ENCODE measurements at regions of chr10 and their contacts with region 1.

Region 1: GRCh38 chr10:26269754-26270153 is 53.2 kb downstream of the GAD2 start:
- DNase-seq: peak; percentile 65

Region 2: DNA sequence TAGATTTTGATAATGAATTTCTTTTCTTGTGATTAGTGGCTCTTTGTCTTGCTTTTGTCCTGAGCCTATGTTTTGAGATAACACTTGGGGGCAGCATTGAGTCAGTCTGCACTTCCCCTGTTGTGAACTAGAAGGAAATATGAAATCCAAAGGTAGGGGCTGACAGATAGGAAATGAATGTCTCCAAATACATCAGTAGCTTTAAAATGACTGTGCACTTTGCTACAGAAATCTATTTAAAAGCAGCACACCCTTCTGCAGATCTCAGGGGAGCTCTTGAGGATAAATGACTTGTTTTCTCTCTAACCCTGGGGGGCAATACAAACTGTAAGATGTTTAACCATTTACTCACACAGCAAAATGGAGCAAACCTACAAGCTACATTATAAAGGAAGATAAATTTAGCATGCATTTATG is 511.7 kb before region 1 on chr10:
- CTCF ChIA-PET with region 1: interaction called, 12 read pairs
- POLR2A ChIA-PET with region 1: no interaction called
- DNase-seq: peak; percentile 46

Region 3: DNA sequence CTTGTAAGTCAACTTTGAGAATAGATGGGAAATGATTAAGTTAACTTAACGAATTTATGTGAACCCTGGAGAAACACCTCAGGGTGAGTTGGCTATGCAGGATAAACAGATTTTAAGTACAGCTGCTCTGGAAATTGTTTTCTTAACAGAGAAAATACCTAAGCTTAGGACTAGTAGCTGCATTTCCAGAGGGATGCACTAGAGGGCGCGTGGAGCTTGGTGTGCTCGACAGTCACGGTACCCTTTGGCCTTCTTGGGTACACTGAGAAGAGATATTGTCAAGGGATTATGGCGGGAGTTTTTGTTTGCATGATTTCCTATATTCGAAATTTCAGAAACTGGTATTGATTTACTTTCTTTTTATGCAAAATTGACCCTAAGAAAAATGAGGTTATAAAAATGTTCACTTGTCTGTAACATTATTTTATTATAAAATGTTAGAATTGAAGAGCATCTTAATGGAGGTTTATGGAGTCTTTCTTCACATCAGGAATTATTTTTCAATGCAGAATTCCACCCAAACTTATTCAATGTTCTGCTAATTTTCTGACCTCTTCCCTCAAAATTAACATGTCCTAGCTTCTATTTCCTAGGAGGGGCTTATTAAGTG is 394.1 kb before region 1 on chr10:
- CTCF ChIA-PET with region 1: interaction called, 18 read pairs
- POLR2A ChIA-PET with region 1: no interaction called
- DNase-seq: peak; percentile 66